ENCODE measurements at regions of chr3 and their contacts with region 1.

Region 1: DNA sequence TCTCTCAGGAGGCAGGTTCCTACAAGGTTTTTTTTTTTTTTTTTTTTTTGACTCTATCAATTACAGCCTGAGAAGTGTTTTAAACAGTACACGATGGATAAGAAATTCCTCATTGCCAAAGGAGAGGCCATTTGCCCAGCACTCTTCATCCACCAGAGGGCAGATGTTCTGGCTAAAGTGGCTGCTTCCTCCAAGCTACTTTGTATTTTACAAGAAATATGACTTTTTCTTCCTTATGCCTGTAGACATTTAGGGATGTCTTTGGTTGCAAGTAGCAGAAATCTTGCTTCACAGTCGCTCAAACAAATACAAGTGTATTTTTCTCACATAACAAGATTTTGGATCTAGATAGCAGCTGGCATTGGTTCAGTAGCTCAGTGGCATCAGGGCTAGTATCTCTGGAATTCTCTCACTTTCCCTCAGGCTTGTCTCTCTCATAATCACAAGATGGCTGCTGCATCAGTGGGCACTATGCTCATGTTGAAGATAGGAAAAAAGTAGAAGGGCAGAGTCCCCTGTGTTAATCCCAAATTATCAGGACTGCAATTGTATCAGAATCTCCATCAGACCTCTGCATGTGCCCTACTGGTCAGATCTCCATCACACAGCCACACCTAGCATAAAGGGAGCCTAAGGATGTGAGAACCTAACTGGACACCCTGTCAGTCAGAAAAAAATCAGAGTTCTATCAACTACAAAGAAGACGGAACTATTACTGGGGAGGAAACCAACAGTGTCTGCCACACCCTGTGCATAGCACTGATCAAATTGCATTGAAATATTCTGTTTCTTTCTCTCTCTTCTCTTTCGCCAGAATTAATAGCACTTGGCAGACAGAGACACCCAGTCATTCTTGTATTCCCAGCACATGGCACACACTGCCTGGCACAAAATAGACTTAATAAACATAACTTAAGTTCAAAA is 138.9 kb upstream of the COL8A1 start:
- DNase-seq: peak; percentile 46 to 48
- H3K4me3 ChIP-seq: no peak overlapping the region
- H3K27ac ChIP-seq: no peak overlapping the region
- H3K4me1 ChIP-seq: no peaks in the 10 kb centered on the region
- H3K27me3 ChIP-seq: no peaks in the 10 kb centered on the region
- CTCF ChIP-seq: peak; percentile 86

Region 2: DNA sequence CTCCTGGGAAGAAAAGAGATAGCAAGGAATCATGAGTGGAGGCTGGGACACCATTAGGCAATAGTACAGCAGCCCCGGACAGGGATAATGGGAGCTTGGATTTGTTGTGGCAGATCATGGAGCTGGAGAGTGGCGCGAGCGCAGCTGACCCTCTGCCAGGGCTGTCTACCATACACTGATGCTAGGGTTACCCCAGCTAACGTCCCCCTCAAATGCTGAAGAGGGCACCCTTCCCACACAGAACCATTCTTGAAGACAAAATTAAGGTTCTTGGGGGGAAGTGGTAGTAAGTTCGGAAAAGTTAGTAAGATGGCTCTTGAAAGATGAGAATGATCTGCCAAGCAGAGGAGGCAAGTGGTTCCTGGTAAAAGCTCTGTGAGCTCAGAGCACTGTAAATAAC is 675.2 kb before region 1 on chr3:
- CTCF ChIA-PET with region 1: interaction called, 21 read pairs
- POLR2A ChIA-PET with region 1: no interaction called
- intact Hi-C with region 1: no loop called
- DNase-seq: no peak
- H3K4me3 ChIP-seq: no peak overlapping the region
- H3K27ac ChIP-seq: no peak overlapping the region
- H3K4me1 ChIP-seq: no peaks in the 10 kb centered on the region
- H3K27me3 ChIP-seq: no peaks in the 10 kb centered on the region
- CTCF ChIP-seq: no peak

Region 3: GRCh38 chr3:99686955-99687612 is 187.6 kb after region 1 on chr3:
- CTCF ChIA-PET with region 1: no interaction called
- POLR2A ChIA-PET with region 1: no interaction called
- intact Hi-C with region 1: loop called (anchors 1 kb)
- DNase-seq: peak in 1 of 2 experiments; percentile 69
- H3K4me3 ChIP-seq: no peak overlapping the region
- H3K27ac ChIP-seq: no peak overlapping the region
- H3K4me1 ChIP-seq: no peaks in the 10 kb centered on the region
- H3K27me3 ChIP-seq: no peaks in the 10 kb centered on the region
- CTCF ChIP-seq: peak; percentile 98

Region 4: DNA sequence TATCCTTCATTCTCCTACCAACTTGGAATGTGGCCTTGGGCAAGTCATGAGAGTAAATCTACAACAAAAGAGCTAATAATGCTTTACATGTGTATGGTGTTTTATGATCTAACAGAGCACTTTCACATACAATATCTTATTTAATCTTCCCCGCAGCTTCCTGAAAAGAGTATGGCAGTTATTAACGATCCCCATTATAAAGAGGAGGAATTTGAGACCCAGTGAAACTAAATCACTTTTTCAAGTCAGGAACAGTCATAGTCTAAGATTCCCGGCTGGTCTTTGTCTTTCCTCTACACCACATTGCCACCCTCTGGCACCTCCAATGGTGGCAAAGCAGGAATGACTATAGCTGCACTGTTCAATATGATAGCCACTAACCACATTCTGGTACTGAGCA is 248.4 kb after region 1 on chr3:
- CTCF ChIA-PET with region 1: no interaction called
- POLR2A ChIA-PET with region 1: no interaction called
- intact Hi-C with region 1: loop called (anchors 1 kb)
- DNase-seq: peak; percentile 33 to 39
- H3K4me3 ChIP-seq: no peak overlapping the region
- H3K27ac ChIP-seq: no peak overlapping the region
- H3K4me1 ChIP-seq: no peaks in the 10 kb centered on the region
- H3K27me3 ChIP-seq: no peaks in the 10 kb centered on the region
- CTCF ChIP-seq: peak; percentile 45; the same call in 1 of the 2 replicates

Region 5: DNA sequence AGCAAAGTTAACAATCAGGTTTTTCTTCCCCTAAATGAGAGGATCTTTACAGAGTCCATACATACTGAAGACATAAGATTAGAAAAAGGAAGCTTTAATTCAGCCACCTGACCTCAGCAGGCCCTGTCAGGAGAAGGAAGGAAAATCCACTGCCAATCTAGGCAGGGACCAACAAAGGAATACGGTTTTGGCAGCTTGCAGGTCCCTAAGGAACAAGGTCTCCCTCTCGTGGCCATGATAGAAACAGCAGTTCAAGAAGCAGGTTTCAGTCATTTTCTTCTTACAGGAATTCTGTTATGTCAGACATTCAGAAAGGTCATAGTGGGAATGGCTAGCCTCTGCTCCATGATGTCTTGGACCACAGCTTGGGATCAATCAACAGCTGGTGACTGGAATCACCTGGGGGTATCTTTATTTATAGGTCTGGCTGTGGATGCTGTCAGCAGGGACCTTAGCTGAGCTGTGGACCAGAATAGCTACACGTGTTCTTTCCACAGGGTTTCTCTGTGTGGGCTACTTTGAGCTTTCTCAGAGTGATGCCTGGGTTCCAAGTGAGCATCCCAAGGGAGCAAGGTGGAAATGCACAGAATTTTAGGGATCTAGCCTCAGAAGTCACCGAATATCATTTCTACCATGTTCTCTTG is 308.8 kb after region 1 on chr3:
- CTCF ChIA-PET with region 1: no interaction called
- POLR2A ChIA-PET with region 1: no interaction called
- intact Hi-C with region 1: loop called (anchors 5 kb)
- DNase-seq: peak; percentile 60
- H3K4me3 ChIP-seq: no peak overlapping the region
- H3K27ac ChIP-seq: no peak overlapping the region
- H3K4me1 ChIP-seq: no peaks in the 10 kb centered on the region
- H3K27me3 ChIP-seq: no peaks in the 10 kb centered on the region
- CTCF ChIP-seq: peak; percentile 86

Measured in PC-9 (cell line).